Activated CD8-positive, alpha-beta T cell treated with anti-CD3 and anti-CD28 coated beads for 36 hours (primary cell): ENCODE measurements at regions of chr16 and their contacts with region 1.

Region 1: GRCh38 chr16:89217388-89218191 is at the start of gene ZNF778:
- DNase-seq: peak; percentile 85
- ATAC-seq: peak; percentile 70
- H3K4me3 Mint-ChIP-seq: peak within 1 kb of the TSS; percentile 75
- H3K27ac Mint-ChIP-seq: peak within 1 kb of the TSS; percentile 84
- H3K4me1 Mint-ChIP-seq: peaks cover 22% of the 10 kb centered on the region
- H3K27me3 Mint-ChIP-seq: no peaks in the 10 kb centered on the region
- CTCF ChIP-seq: no peak
- total RNA-seq, gene ZNF778: 4.3 to 6.2 TPM

Region 2: GRCh38 chr16:88941913-88942909 is 275.4 kb before region 1 on chr16:
- CTCF ChIA-PET with region 1: interaction called, 5 read pairs
- POLR2A ChIA-PET with region 1: no interaction called
- intact Hi-C with region 1: loop called (anchors 10 kb)
- DNase-seq: peak; percentile 72
- ATAC-seq: peak; percentile 70
- H3K4me3 Mint-ChIP-seq: peak overlapping the region; percentile 10
- H3K27ac Mint-ChIP-seq: no peak overlapping the region
- H3K4me1 Mint-ChIP-seq: peaks cover 9% of the 10 kb centered on the region
- H3K27me3 Mint-ChIP-seq: peaks cover 44% of the 10 kb centered on the region
- CTCF ChIP-seq: peak; percentile 93